Breast epithelium (tissue), 4 donors: ENCODE measurements at regions of chr12 and their contacts with region 1.

Region 1: DNA sequence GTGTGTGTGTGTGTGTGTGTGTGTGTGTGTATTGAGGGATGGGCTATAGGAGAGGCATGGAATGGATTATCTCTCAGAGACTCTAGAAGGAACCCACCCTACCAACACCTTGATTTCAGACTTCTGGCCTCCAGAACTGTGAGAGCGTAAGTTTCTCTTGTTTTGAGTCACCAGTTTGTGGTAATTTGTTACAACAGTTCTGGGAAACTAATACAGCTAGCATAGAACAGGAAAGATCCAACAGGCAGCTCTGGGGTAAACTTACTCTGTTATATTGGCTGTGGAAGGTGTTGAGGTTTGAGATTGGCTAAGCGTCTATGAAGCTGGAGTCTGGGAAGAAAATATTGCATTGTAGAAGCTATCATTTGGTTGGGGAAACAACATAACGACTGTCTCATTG is 334.3 kb downstream of the AACS start:
- DNase-seq: no peak
- H3K4me3 ChIP-seq: no peak overlapping the region
- H3K27ac ChIP-seq: no peak overlapping the region
- H3K4me1 ChIP-seq: no peaks in the 10 kb centered on the region
- H3K27me3 ChIP-seq: no peaks in the 10 kb centered on the region
- CTCF ChIP-seq: no peak
- POLR2A ChIP-seq: no peak

Region 2: DNA sequence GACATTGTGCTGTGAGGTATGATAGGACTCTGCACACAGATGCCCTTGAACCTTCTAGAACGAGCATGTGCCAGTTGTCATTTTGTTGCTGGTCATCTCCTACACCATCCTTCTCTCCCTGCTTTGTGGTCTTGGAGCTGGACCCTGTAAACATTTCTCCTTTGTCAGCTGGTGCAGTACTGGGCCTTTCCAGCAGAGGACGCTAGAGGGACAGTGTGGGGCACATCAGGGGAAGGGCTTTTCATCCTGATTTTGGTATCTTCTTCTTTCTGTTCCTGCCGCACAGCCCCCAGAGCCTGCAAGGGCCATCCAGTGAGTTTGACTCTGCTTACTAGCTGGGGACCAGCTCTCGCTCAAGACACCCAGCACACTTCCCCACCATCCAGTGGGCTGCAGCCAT is 150.3 kb after region 1 on chr12:
- intact Hi-C with region 1: no loop called
- DNase-seq: no peak
- H3K4me3 ChIP-seq: no peak overlapping the region
- H3K27ac ChIP-seq: no peak overlapping the region
- H3K4me1 ChIP-seq: no peaks in the 10 kb centered on the region
- H3K27me3 ChIP-seq: no peaks in the 10 kb centered on the region
- CTCF ChIP-seq: no peak
- POLR2A ChIP-seq: no peak

Region 3: GRCh38 chr12:126869644-126870043 is 1470.2 kb after region 1 on chr12:
- intact Hi-C with region 1: loop called (anchors 10 kb)
- DNase-seq: no peak
- H3K4me3 ChIP-seq: no peak overlapping the region
- H3K27ac ChIP-seq: no peak overlapping the region
- H3K4me1 ChIP-seq: no peaks in the 10 kb centered on the region
- H3K27me3 ChIP-seq: no peaks in the 10 kb centered on the region
- CTCF ChIP-seq: no peak
- POLR2A ChIP-seq: no peak